ENCODE measurements at regions of chr2 and their contacts with region 1.

Region 1: GRCh38 chr2:55232084-55232862 is at the starts of genes CLHC1 and RPS27A:
- DNase-seq: peak; percentile 95
- H3K4me3 Mint-ChIP-seq: peak within 1 kb of the TSS; percentile 80
- H3K27ac Mint-ChIP-seq: peak within 1 kb of the TSS; percentile 92
- H3K4me1 Mint-ChIP-seq: peaks cover 27% of the 10 kb centered on the region
- H3K27me3 Mint-ChIP-seq: no peaks in the 10 kb centered on the region
- CTCF ChIP-seq: no peak
- total RNA-seq, gene CLHC1: 8.4 and 10.4 TPM in 2 replicates
- total RNA-seq, gene RPS27A: 702 and 747 TPM in 2 replicates

Region 2: DNA sequence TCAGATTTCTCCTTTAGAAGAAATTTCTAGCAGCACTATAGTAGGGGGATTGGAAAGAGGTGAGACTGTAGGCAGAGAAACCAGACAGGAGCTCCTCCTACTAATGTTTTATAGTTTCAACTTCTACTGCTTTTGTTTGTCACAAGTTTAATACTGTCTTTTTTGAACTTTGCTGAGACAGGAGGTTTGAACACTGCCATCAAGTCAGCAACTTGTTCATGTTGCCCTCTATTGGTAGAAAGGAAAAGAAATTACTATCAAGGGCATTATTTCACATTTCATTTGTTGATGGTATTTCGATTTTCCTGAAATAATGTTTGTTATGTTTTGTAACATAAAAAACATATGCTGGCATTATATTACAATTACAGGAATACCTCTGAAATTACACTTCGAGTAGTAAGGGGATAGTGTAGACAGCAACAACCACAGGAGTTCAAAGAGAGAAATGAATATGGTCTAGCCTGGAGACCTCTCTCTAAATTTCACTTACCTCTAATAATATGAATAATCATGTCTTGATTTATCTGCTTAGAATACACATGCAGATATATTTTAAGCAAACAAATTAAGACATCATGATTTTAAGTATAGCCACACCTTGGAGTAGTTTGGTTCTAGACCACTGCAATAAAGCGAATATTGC is 199.8 kb after region 1 on chr2:
- CTCF ChIA-PET with region 1: no interaction called
- intact Hi-C with region 1: loop called (anchors 10 kb)
- DNase-seq: no peak
- H3K4me3 Mint-ChIP-seq: no peak overlapping the region
- H3K27ac Mint-ChIP-seq: no peak overlapping the region
- H3K4me1 Mint-ChIP-seq: peaks cover 8% of the 10 kb centered on the region
- H3K27me3 Mint-ChIP-seq: no peaks in the 10 kb centered on the region
- CTCF ChIP-seq: peak; percentile 25

Region 3: DNA sequence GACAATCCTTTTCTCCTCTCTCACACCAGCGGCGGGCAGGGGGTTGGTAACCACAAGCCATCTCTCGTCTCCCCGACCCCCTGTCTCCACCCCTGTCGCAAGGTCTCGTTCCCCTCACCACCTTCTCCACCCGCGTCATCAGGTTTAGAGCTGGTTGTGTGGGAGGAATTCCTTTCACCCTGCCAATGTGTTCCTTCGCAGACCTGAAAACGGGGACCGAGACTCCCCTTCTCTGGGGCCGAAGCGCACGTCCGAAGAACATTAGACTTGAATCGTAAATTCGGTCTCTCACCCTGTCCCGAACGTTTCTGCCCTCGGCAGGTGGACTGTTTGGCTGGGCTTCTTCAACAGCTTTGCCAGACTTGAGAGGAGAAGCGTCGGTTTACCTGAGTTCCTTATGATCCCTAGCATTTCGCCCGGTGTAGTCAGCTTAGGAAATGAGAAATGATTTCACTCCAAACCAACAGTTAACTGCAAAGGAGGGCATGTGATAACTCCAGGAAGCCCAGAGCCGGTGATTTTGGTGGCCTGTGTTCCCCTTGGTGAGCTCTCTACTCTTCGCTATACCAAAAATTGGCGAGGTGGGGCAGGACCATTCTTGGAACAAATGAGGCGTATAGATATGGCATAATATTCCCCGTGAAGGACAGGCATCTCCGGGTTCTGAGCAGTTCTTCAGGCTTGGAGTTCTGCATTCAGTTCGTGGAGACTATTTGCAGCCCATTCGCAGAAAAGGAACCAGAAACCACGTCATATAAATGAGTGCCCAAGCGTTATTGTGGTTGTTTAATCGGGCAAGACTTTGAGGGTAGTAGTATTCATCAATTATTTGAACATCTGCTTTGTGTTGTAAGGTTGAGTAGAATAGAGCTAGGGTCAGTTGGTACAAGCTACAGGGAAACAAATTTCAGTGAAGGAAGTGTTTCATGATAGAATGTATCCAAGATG is 287.9 kb after region 1 on chr2:
- CTCF ChIA-PET with region 1: no interaction called
- intact Hi-C with region 1: loop called (anchors 10 kb)
- DNase-seq: peak; percentile 23
- H3K4me3 Mint-ChIP-seq: peak overlapping the region; percentile 94
- H3K27ac Mint-ChIP-seq: peak overlapping the region; percentile 94
- H3K4me1 Mint-ChIP-seq: peaks cover 9% of the 10 kb centered on the region
- H3K27me3 Mint-ChIP-seq: no peaks in the 10 kb centered on the region
- CTCF ChIP-seq: no peak

Measured in Calu3 (cell line).